ENCODE measurements at regions of chr18 and their contacts with region 1.

Region 1: GRCh38 chr18:42053188-42053781 is 98.3 kb downstream of the PIK3C3 start:
- DNase-seq: peak; percentile 75
- ATAC-seq: peak; percentile 69
- H3K4me3 Mint-ChIP-seq: no peak overlapping the region
- H3K27ac Mint-ChIP-seq: no peak overlapping the region
- H3K4me1 Mint-ChIP-seq: peaks cover 6% of the 10 kb centered on the region
- H3K27me3 Mint-ChIP-seq: no peaks in the 10 kb centered on the region

Region 2: DNA sequence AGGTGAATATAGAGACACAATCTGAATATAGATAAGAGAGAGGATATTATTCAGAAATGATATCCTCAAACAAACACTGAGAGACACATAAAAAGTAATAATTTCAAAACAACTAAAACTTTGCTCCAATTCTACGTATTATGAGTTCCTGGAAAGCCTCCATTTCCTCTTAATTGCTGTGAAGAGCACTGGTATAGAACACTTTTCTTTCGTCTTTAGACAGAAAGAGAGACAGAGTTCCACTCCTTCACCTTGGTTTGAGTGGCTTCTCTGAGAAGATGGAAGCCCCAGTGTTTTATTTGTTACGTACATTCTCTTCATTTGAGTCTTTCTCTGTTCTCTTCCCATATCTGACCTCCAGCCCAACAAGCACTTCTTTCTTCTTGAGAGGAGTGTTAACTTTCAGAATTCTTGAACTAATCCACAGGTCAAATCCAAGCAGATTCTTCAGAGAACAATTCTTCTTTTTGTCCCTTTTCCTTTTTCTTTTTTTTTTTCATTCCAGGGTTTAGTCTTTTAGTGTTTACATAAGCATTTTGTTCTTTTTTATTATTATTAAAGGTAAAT is 104.7 kb before region 1 on chr18:
- CTCF ChIA-PET with region 1: no interaction called
- DNase-seq: no peak
- ATAC-seq: peak; percentile 52
- H3K4me3 Mint-ChIP-seq: peak overlapping the region; percentile 52
- H3K27ac Mint-ChIP-seq: peak overlapping the region; percentile 95
- H3K4me1 Mint-ChIP-seq: peaks cover 37% of the 10 kb centered on the region
- H3K27me3 Mint-ChIP-seq: peaks cover 13% of the 10 kb centered on the region

Region 3: DNA sequence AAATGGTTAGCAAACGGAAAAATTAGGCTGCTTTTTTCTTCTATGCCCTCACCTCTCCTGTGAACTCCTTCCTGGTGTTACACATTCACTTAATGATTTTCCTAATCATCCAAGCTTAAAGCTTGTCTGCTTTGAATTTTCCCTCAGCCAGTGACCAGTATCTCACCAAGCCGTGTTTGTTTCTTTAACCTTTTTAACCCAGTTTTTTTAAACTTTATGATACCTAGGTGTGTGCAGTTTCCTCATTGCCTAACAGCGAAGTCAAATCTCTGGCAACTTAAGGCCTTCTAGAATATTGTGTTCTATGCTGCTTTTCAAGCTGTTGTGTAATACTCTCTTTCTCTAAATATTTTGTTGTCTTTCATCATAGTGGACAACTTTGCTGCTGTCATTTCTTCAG is 14.7 kb after region 1 on chr18:
- CTCF ChIA-PET with region 1: interaction called, 14 read pairs
- DNase-seq: no peak
- ATAC-seq: no peak
- H3K4me3 Mint-ChIP-seq: no peak overlapping the region
- H3K27ac Mint-ChIP-seq: no peak overlapping the region
- H3K4me1 Mint-ChIP-seq: peaks cover 11% of the 10 kb centered on the region
- H3K27me3 Mint-ChIP-seq: no peaks in the 10 kb centered on the region

Region 4: GRCh38 chr18:42082415-42083234 is 29.3 kb after region 1 on chr18:
- CTCF ChIA-PET with region 1: interaction called, 14 read pairs
- DNase-seq: no peak
- ATAC-seq: peak; percentile 75
- H3K4me3 Mint-ChIP-seq: peak overlapping the region; percentile 55
- H3K27ac Mint-ChIP-seq: peak overlapping the region; percentile 82
- H3K4me1 Mint-ChIP-seq: peaks cover 54% of the 10 kb centered on the region
- H3K27me3 Mint-ChIP-seq: no peaks in the 10 kb centered on the region

Region 5: DNA sequence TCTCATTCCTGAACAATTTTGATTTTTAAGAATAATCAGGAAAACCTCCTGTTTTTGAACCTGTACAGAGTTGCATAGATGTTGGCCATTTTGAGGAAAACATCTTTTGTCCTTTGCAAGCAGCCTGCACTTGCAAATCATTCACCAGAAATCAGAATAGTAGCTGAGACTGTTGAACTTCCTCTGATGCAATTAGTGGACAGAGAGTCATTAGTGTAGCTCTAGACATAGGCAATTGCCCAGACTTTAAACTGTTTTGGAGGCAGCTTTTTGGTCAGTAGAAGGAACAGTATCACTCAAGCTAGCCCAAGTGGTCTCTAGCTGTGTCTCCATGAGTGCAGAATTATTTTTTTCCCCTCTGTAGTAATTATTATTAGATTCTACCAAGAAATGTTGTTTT is 227.8 kb after region 1 on chr18:
- CTCF ChIA-PET with region 1: no interaction called
- DNase-seq: no peak
- ATAC-seq: no peak
- H3K4me3 Mint-ChIP-seq: no peak overlapping the region
- H3K27ac Mint-ChIP-seq: no peak overlapping the region
- H3K4me1 Mint-ChIP-seq: no peaks in the 10 kb centered on the region
- H3K27me3 Mint-ChIP-seq: peaks cover 2% of the 10 kb centered on the region